Activated CD4-positive, alpha-beta T cell treated with anti-CD3 and anti-CD28 coated beads for 36 hours (primary cell): ENCODE measurements at regions of chr2 and their contacts with region 1.

Region 1: GRCh38 chr2:157336137-157337010 is 10.8 kb upstream of the ERMN start:
- DNase-seq: peak; percentile 60
- ATAC-seq: no peak
- H3K4me3 Mint-ChIP-seq: peak overlapping the region; percentile 37
- H3K27ac Mint-ChIP-seq: no peak overlapping the region
- H3K4me1 Mint-ChIP-seq: peaks cover 70% of the 10 kb centered on the region
- H3K27me3 Mint-ChIP-seq: no peaks in the 10 kb centered on the region

Region 2: GRCh38 chr2:157244691-157245090 is 91.7 kb before region 1 on chr2:
- CTCF ChIA-PET with region 1: no interaction called
- POLR2A ChIA-PET with region 1: no interaction called
- intact Hi-C with region 1: no loop called
- DNase-seq: no peak
- ATAC-seq: no peak
- H3K4me3 Mint-ChIP-seq: no peak overlapping the region
- H3K27ac Mint-ChIP-seq: no peak overlapping the region
- H3K4me1 Mint-ChIP-seq: peaks cover 24% of the 10 kb centered on the region
- H3K27me3 Mint-ChIP-seq: peaks cover 13% of the 10 kb centered on the region

Region 3: DNA sequence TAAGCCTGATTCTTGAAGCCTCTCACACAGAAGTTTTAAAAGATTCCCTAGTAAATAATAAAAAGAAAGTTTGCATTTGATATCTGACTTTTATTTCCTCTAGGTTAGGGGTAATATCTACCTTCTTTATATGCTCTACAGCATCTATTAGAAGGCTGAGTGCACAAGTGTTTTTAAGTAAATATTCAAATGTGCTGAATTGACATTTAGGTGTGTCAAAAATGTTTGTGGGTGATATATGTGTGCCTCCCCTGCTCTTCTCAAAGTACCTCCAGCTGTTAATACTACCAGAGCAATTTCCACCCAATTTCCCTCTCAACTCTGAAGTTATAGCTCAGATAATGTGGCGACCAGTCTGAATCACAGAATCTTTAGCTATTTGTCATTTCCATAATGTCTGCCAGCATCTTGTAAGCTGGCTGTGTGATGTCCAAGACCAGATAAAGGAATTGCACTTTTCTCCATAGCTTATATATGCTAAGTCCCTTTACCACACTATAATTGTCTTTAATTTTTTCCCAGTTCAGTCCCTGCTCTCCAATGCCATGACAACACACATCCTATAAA is 13.7 kb after region 1 on chr2:
- CTCF ChIA-PET with region 1: interaction called, 67 read pairs
- POLR2A ChIA-PET with region 1: no interaction called
- intact Hi-C with region 1: no loop called
- DNase-seq: no peak
- ATAC-seq: peak; percentile 23
- H3K4me3 Mint-ChIP-seq: no peak overlapping the region
- H3K27ac Mint-ChIP-seq: no peak overlapping the region
- H3K4me1 Mint-ChIP-seq: peaks cover 47% of the 10 kb centered on the region
- H3K27me3 Mint-ChIP-seq: no peaks in the 10 kb centered on the region

Region 4: DNA sequence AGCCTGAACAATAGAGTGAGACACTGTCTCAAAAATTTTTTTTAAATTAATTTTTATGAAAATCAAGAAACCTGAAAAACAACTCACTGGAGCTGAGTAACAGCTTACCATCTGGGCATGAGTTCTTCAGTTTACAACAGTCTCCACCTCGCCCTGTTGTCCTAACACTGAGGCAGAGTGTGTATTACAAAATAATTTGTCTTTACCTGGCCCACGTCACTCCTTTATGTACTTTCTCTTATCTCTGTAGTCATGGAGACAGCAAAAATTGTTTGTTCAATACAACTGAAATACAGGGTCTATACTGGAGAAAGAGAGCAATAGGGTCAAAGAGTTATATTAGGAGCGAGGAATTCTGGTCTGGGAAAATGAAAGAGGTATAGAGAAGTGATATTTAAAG is 59.4 kb after region 1 on chr2:
- CTCF ChIA-PET with region 1: interaction called, 12 read pairs
- POLR2A ChIA-PET with region 1: no interaction called
- intact Hi-C with region 1: no loop called
- DNase-seq: no peak
- ATAC-seq: no peak
- H3K4me3 Mint-ChIP-seq: no peak overlapping the region
- H3K27ac Mint-ChIP-seq: no peak overlapping the region
- H3K4me1 Mint-ChIP-seq: peaks cover 7% of the 10 kb centered on the region
- H3K27me3 Mint-ChIP-seq: no peaks in the 10 kb centered on the region

Region 5: GRCh38 chr2:157433394-157433793 is 97.0 kb after region 1 on chr2:
- CTCF ChIA-PET with region 1: interaction called, 11 read pairs
- POLR2A ChIA-PET with region 1: no interaction called
- intact Hi-C with region 1: no loop called
- DNase-seq: no peak
- ATAC-seq: no peak
- H3K4me3 Mint-ChIP-seq: peak overlapping the region; percentile 93
- H3K27ac Mint-ChIP-seq: peak overlapping the region; percentile 95
- H3K4me1 Mint-ChIP-seq: peaks cover 60% of the 10 kb centered on the region
- H3K27me3 Mint-ChIP-seq: no peaks in the 10 kb centered on the region

Region 6: DNA sequence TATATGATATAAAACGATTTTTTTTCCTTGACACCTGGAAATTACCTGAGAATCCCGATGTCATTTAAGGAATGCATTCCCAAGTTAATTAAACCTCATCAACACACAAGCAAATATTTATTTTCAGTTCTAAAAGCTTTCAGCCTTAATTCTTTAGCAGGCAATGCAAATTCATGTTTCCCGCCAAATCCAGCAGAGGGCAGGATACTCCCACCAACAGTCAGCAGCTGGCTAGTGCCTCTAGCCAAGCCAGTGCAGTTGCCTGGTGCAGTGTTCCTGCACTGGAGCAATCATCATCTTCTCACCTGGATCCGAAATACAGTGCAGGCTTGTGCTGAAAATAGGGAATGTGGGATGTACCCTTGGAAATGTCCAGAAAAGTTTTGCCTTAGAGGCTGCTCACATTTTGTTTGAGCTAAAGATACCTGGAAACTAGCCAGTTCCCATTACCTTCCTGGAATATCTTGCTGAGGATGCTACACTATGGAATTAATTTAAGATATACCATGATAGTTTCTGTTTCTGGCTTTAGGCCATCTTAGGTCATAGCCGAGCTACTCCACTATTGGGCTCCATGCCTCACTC is 155.9 kb after region 1 on chr2:
- CTCF ChIA-PET with region 1: interaction called, 10 read pairs
- POLR2A ChIA-PET with region 1: no interaction called
- intact Hi-C with region 1: no loop called
- DNase-seq: peak; percentile 84
- ATAC-seq: peak; percentile 90
- H3K4me3 Mint-ChIP-seq: no peak overlapping the region
- H3K27ac Mint-ChIP-seq: no peak overlapping the region
- H3K4me1 Mint-ChIP-seq: peaks cover 68% of the 10 kb centered on the region
- H3K27me3 Mint-ChIP-seq: no peaks in the 10 kb centered on the region